Right ventricle myocardium inferior (tissue), 1 donor: ENCODE measurements at regions of chr18 and their contacts with region 1.

Region 1: GRCh38 chr18:623761-624620 is 27.2 kb downstream of the CLUL1 start:
- DNase-seq: no peak
- ATAC-seq: peak; percentile 63

Region 2: GRCh38 chr18:658001-658946 is 34.3 kb after region 1 on chr18:
- intact Hi-C with region 1: no loop called
- DNase-seq: peak; percentile 83
- ATAC-seq: peak; percentile 90

Region 3: DNA sequence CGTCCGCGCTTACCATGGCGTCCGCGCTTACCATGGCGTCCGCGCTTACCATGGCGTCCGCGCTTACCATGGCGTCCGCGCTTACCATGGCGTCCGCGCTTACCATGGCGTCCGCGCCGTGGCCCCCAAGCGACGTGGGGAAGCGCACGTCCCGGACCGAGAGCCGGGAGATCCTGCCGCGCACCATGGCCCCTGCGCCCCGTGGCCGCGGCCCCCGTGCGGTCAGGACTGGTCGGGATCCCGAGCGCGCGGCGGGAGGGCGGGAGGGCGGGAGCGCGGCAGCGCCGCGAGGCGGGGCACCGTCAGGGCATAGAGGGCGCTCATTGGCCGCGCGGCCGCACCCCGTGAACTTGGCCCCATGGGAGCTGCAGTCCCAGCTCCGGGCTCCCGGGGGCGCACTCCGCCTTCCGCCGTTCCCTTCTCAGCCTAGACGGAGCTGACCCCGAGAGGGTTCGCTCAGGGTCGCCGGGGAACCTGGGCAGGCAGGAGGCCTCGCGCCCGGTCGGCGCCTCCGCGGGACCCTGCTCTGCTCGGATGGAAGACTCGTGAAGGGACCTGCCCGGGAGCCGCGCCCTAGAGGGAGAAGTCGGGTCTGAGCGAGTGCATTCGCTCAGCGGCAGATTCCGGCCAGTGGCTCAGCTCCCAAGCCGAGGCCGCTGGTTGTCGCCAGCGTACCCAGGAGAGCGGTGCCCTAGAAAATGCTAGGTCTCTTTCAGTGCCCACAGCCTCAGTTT is 88.6 kb after region 1 on chr18 and contains the start of gene ENOSF1:
- intact Hi-C with region 1: loop called (anchors 10 kb)
- DNase-seq: peak; percentile 88
- ATAC-seq: peak; percentile 91
- total RNA-seq, gene ENOSF1: 25.3 TPM

Region 4: GRCh38 chr18:741931-742512 is 118.0 kb after region 1 on chr18:
- intact Hi-C with region 1: loop called (anchors 5 kb)
- DNase-seq: no peak
- ATAC-seq: peak; percentile 34

Region 5: DNA sequence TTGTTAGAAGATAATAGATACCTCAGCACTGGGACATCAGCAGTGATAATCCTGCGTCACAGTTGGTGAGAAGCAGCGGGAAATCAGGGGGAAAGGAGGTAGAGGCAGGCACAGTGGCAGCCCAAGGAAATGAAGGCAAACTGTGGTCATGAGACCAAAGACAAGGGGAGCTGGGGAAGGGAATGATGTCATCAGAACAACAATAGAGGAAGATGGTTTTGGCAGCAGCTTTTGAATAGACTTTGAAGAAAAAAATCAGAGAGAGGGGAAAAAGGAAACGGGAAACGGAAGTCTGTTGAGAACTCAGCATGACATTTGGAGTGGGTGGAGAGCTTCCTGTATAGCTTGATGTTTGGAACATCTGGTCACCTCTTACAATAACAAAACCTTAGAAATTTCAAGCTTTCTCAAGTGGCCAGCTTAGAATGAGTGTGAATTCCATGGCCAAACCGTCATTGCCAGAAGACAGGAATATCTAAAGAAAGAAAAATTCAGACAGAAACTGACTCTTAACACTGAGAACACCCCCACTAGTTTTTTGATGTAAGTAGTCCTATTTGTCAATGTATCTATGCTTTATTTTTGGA is 206.4 kb after region 1 on chr18:
- intact Hi-C with region 1: loop called (anchors 2 kb)
- DNase-seq: no peak
- ATAC-seq: peak; percentile 55

Region 6: GRCh38 chr18:839224-840022 is 215.4 kb after region 1 on chr18:
- intact Hi-C with region 1: loop called (anchors 1 kb)
- DNase-seq: peak; percentile 92
- ATAC-seq: peak; percentile 94